ENCODE measurements at regions of chr16 and their contacts with region 1.

Region 1: GRCh38 chr16:69150146-69150865 is 17.9 kb downstream of the UTP4 start:
- DNase-seq: peak in 4 of 5 donors; percentile 29 to 65 (median 55)
- H3K4me3 ChIP-seq: no peak overlapping the region
- H3K4me3 Mint-ChIP-seq: no peak overlapping the region
- H3K27ac ChIP-seq: no peak overlapping the region
- H3K27ac Mint-ChIP-seq: no peak overlapping the region
- H3K4me1 ChIP-seq: no peaks in the 10 kb centered on the region
- H3K4me1 Mint-ChIP-seq: peaks cover 0 to 3% (median 3%) of the 10 kb centered on the region in 3 donors
- H3K27me3 ChIP-seq: no peaks in the 10 kb centered on the region
- H3K27me3 Mint-ChIP-seq: no peaks in the 10 kb centered on the region

Region 2: GRCh38 chr16:69186642-69187445 is 36.5 kb after region 1 on chr16 and contains the start of gene SNTB2:
- CTCF ChIA-PET with region 1: interaction called, 18 read pairs
- POLR2A ChIA-PET with region 1: interaction called, 9 read pairs
- DNase-seq: peak; percentile 78 to 88 (median 84)
- H3K4me3 ChIP-seq: peak within 1 kb of the TSS; percentile 78
- H3K4me3 Mint-ChIP-seq: peak within 1 kb of the TSS; percentile 97 to 100 (median 100)
- H3K27ac ChIP-seq: peak within 1 kb of the TSS; percentile 72
- H3K27ac Mint-ChIP-seq: peak within 1 kb of the TSS; percentile 91 to 100 (median 98)
- H3K4me1 ChIP-seq: peaks cover 42% of the 10 kb centered on the region
- H3K4me1 Mint-ChIP-seq: peaks cover 43 to 55% (median 53%) of the 10 kb centered on the region in 3 donors
- H3K27me3 ChIP-seq: no peaks in the 10 kb centered on the region
- H3K27me3 Mint-ChIP-seq: peaks cover 0 to 2% of the 10 kb centered on the region in 2 donors
- total RNA-seq, gene SNTB2: 13.6 to 14.9 TPM

Region 3: DNA sequence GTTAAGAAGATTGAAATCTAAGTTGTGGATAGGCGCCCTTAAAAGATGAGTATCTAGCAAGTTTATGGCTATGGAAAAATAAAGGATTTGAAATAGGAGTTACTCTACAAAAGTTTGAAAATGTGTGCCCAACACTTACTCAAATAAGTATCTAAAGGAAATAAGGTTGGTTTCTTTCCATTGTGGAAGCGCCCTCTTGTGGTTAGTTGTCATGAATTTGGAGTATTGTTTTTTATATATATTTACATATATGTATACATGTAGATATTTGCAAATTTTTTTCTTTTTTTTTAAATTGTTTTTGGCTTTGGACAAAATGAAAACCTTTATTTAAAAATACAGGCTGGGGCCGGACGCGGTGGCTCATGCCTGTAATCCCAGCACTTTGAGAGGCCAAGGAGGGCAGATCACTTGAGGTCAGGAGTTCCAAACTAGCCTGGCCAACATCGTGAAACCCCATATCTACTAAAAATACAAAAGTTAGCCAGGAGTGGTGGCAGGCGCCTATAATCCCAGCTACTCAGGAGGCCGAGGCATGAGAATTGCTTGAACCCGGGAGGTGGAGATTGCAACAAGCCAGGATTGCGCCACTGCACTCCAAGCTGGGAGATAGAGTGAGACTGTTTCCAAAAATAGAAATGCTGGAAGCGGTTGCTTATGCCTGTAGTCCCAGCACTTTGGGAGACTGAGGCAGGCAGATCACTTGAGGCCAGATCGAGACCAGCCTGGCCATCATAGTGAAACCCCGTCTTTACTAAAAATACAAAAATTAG is 136.8 kb after region 1 on chr16:
- CTCF ChIA-PET with region 1: interaction called, 159 read pairs
- POLR2A ChIA-PET with region 1: no interaction called
- DNase-seq: peak in 4 of 5 donors; percentile 7 to 56 (median 36)
- H3K4me3 ChIP-seq: no peak overlapping the region
- H3K4me3 Mint-ChIP-seq: no peak overlapping the region
- H3K27ac ChIP-seq: no peak overlapping the region
- H3K27ac Mint-ChIP-seq: peak overlapping the region in 2 of 8 donors; percentile 3 to 20
- H3K4me1 ChIP-seq: no peaks in the 10 kb centered on the region
- H3K4me1 Mint-ChIP-seq: peaks cover 0 to 3% (median 2%) of the 10 kb centered on the region in 3 donors
- H3K27me3 ChIP-seq: no peaks in the 10 kb centered on the region
- H3K27me3 Mint-ChIP-seq: no peaks in the 10 kb centered on the region

Region 4: DNA sequence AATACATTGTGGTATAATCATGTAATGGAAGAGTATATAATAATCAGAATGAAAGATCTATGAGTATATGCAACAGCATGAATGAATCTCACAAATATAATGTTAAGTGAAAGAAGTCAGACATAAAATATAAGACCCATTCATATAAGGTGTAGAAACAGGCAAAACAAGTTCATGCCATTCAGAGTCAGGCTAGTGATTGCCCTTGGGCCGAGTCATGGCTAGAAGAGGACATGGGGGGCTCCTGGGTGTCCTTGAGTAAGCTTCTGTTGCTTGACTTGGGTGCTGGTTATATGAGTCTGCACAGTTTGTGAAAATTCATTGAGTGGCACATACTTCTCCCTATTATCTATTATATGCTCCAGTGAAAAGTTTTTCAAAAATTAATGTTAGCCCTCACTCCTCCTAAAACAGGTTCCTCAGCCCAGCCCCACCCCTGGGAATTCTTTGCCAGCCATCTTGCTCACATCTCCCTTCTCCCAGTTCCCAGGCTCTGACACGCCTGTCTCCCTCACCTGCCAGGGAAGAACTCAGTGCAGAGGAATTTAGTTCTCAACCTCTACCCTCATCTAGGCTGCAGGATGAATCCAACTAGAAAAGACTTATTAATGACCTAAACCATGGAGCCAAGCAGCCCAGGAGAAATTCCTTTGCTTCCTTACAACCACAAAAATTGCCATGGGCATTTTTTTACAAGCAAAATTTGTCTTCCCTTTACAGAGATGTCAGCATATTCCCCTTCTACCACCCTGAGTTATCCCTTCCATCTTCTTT is 363.1 kb after region 1 on chr16:
- CTCF ChIA-PET with region 1: no interaction called
- POLR2A ChIA-PET with region 1: no interaction called
- DNase-seq: no peak
- H3K4me3 ChIP-seq: no peak overlapping the region
- H3K4me3 Mint-ChIP-seq: no peak overlapping the region
- H3K27ac ChIP-seq: no peak overlapping the region
- H3K27ac Mint-ChIP-seq: no peak overlapping the region
- H3K4me1 ChIP-seq: no peaks in the 10 kb centered on the region
- H3K4me1 Mint-ChIP-seq: no peaks in the 10 kb centered on the region
- H3K27me3 ChIP-seq: no peaks in the 10 kb centered on the region
- H3K27me3 Mint-ChIP-seq: peaks cover 4 to 7% of the 10 kb centered on the region in 2 donors